ENCODE measurements at regions of chr3 and their contacts with region 1.

Region 1: DNA sequence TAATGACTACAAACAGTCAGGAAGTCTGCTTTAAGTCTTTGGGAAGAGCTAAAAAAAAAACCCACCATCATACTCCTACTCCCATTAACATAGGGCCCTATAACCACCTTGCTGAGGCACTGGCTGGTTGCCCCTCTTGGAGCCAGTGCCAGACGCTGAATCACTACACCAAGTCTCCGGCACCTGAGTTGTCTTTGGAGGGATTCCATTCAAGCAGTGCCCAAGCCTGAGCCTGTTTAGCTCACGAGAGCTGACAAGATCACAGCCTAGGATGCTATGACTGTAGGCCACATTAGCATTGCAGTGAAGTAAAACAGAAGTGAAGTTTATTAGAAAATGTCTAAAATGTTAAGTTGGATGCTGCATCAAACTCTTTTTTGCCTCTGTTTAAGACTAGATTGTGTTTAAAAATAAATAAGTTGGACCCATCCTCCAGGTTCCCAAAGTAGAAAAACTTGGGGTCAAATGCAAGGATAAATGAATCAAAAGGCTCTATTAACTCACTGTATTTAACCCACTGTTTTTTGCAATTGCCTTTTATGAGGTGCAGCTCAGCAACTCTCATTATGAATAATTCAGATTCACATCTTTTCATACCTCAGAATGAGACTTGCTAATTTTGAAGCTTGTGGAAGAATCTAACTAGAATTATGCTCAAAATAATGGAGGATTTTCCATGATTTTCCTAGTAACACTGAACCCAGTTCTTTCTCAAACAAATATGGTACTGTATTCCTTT is 461.9 kb downstream of the FOXP1 start:
- DNase-seq: no peak
- H3K4me3 Mint-ChIP-seq: no peak overlapping the region
- H3K27ac Mint-ChIP-seq: no peak overlapping the region
- H3K4me1 Mint-ChIP-seq: peaks cover 80% of the 10 kb centered on the region
- H3K27me3 Mint-ChIP-seq: no peaks in the 10 kb centered on the region

Region 2: DNA sequence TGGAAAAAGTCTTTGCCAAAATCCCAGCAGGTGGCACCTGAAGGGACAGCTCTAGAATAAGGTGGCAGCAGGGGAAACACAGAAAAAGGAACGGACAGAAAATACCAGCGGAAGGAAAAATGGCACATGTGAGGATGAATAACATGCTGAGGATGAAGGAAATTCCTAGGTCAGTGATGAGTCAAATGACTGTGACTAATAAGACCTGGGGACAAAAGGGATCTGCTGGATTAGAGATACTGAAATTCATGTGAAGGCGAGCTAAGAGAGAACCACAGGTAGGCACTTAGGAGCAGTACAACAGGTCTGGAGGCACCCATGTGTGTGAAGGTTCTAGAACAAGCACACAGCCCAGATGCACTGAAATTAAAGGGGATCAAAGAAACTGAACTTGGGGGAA is 20.6 kb before region 1 on chr3:
- intact Hi-C with region 1: loop called (anchors 2 kb)
- DNase-seq: no peak
- H3K4me3 Mint-ChIP-seq: peak overlapping the region; percentile 27
- H3K27ac Mint-ChIP-seq: peak overlapping the region; percentile 66
- H3K4me1 Mint-ChIP-seq: peaks cover 70% of the 10 kb centered on the region
- H3K27me3 Mint-ChIP-seq: peaks cover 2% of the 10 kb centered on the region

Region 3: DNA sequence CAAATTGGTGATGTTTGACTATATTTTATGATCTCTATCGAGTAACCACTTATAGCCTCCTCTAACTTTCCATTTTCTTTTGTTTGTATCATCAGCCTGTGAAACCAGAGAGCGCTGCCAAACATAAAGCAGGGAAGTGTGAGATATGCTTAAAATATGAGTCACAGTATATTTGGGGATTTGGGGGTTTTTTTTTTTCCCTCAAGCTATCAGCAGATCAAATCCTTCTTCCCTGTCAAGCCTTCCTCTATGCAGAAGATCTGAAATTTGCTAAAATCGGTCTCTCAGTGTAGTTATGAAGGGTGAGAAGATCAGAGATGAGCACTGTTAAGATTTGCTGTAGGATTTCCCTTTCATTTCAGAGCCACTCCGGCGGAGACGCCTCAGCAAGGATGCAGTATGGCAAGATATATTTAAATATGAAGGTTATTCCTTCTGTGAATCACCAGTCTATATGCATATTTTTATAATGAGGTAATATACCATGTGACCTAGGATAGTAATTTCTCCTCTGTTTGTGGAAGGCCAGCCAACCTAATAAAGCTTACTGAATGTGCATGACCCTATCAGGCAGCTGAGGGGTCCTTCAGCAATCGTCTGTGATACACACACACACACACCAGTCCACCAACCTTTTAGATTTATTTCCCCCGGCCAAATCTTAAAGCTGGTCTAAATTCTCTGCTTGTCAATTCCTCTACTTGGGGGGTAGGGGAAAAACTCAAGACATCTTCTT is 12.2 kb before region 1 on chr3:
- intact Hi-C with region 1: loop called (anchors 2 kb)
- DNase-seq: no peak
- H3K4me3 Mint-ChIP-seq: no peak overlapping the region
- H3K27ac Mint-ChIP-seq: peak overlapping the region; percentile 42
- H3K4me1 Mint-ChIP-seq: peaks cover 60% of the 10 kb centered on the region
- H3K27me3 Mint-ChIP-seq: no peaks in the 10 kb centered on the region

Measured in activated T-helper 1 cell treated with anti-CD3 and anti-CD28 coated beads, Interleukin-12 subunit alpha, Interleukin-12 subunit beta, Interleukin-2, Interleukin-4 antibody, amounts not matched to agents 30 ng/mL and 10 ng/mL and 1 ng/mL, durations not matched to agents 14 hours and 24 hours and 36 hours (primary cell).